ENCODE measurements at regions of chr19 and their contacts with region 1.

Region 1: DNA sequence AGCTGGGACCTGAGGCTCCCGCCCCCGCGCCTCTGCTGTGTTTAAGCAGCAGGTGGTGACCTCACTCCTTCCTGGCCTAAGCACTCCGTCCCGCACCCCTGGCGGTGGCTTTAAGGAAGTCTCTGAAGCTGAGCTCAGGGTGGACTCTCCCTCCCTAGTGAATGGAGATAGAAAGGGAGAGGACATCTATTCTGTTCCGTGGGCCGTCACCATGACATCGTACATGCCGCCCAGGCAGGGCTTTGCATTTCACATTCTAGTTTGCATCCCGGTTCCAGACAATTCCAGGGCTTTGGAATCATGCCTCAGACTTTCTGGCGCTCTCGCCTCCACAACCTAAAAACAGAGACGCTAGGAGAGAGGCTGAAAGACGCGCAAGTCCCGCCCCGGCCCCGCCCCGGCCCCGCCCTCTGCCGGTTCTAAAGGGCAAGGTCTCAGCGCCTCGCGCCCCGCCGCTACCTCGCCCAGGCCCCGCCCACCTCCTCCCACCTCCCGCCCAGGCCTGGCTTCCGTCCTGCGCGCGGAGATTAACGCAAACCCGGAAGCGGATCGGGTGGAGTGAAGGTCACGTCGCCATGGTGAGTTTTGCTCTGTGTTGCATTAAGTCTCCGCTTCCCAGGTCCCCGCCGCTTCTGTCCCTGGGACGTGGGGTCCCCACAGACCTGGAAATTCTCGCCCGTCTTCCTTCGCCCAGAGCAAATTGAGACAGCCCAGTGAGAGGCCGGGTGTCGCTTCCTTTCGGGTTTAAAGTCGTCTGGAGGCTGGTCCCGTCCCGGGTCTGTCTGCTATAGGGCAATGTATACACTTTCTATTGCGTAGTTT is at the start of gene ZNF808:
- DNase-seq: peak; percentile 87 to 92 (median 91)
- H3K4me3 ChIP-seq: peak within 1 kb of the TSS; percentile 63 to 95 (median 82)
- H3K4me3 Mint-ChIP-seq: peak within 1 kb of the TSS; percentile 98 to 99
- H3K27ac ChIP-seq: peak within 1 kb of the TSS; percentile 94 to 96
- H3K27ac Mint-ChIP-seq: peak within 1 kb of the TSS; percentile 96 to 100 (median 99)
- H3K4me1 ChIP-seq: peaks cover 14 to 23% of the 10 kb centered on the region in 2 donors
- H3K4me1 Mint-ChIP-seq: peaks cover 21% of the 10 kb centered on the region
- H3K27me3 ChIP-seq: no peaks in the 10 kb centered on the region
- H3K27me3 Mint-ChIP-seq: peaks cover 0 to 2% (median 1%) of the 10 kb centered on the region in 3 donors
- CTCF ChIP-seq: peak; percentile 78
- polyA plus RNA-seq, gene ZNF808: 2.6 to 9.2 (median 3.4) TPM

Region 2: DNA sequence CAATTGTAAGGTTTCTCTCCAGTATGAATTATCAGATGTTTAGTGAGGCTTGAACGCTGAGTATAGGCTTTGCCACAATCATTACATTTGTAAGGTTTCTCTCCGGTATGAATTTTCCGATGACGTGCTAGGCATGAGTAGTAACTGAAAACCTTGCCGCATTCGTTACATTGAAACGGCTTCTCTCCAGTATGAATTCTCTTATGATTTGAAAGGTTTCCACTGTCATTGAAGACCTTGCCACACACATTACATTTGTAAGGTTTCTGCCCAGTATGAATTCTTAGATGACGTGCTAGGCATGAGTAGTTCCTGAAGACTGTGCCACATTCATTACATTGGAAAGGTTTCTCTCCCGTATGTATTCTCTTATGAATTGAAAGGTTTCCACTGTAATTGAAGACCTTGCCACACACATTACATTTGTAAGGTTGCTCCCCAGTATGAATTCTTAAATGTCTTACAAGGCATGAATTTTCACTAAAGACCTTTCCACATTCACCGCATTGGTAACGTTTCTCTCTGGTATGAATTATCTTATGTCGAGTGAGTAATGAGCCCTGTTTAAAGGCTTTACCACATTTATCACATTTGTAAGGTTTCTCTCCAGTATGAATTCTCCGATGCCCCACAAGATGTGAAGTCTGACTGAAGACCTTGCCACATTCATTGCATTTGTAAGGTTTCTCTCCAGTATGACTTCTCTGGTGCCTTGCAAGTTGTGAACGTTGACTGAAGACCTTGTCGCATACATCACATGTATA is 371.6 kb before region 1 on chr19:
- intact Hi-C with region 1: no loop called
- DNase-seq: no peak
- H3K4me3 ChIP-seq: peak overlapping the region in 1 of 3 experiments; percentile 31
- H3K4me3 Mint-ChIP-seq: no peak overlapping the region
- H3K27ac ChIP-seq: no peak overlapping the region
- H3K27ac Mint-ChIP-seq: no peak overlapping the region
- H3K4me1 ChIP-seq: no peaks in the 10 kb centered on the region
- H3K4me1 Mint-ChIP-seq: no peaks in the 10 kb centered on the region
- H3K27me3 ChIP-seq: no peaks in the 10 kb centered on the region
- H3K27me3 Mint-ChIP-seq: no peaks in the 10 kb centered on the region
- CTCF ChIP-seq: no peak

Region 3: DNA sequence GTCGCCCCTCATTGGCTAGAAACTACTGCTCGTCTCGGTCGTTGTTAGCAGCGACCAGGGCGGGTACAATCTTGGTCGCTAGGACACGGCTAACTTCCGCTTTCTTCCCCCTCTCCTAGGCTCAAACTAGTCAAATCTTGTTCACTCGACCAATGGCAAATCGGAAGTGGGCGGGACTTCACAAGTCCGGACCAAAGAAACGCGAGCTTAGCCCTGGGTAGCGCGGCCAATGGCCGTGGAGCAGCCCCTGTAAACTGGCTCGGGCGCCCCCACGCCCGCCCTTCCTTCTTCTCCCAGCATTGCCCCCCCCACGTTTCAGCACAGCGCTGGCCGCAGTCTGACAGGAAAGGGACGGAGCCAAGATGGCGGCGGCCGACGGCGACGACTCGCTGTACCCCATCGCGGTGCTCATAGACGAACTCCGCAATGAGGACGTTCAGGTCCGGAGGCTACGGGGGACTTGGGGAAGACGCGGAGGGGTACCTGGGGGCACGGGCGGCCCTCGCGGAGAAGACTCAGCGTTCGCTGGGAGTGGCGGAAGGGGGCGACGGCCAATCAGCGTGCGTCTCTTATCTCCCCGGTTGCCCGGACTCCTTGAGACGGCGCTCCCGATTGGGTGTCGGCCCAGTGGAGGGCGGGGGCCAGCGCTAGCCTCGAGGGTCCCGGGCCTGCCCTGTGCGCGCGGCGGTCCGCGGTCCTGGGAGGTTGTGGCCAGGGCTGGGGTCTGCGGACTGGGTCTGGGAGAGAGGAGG is 337.4 kb before region 1 on chr19 and contains the start of gene PPP2R1A:
- intact Hi-C with region 1: loop called in 1 of 2 experiments (anchors 5 kb)
- DNase-seq: peak; percentile 100
- H3K4me3 ChIP-seq: peak within 1 kb of the TSS; percentile 85 to 94 (median 88)
- H3K4me3 Mint-ChIP-seq: peak within 1 kb of the TSS; percentile 90 to 99
- H3K27ac ChIP-seq: peak within 1 kb of the TSS; percentile 95 to 99
- H3K27ac Mint-ChIP-seq: peak within 1 kb of the TSS; percentile 98 to 100 (median 100)
- H3K4me1 ChIP-seq: peaks cover 20 to 24% of the 10 kb centered on the region in 2 donors
- H3K4me1 Mint-ChIP-seq: peaks cover 32% of the 10 kb centered on the region
- H3K27me3 ChIP-seq: no peaks in the 10 kb centered on the region
- H3K27me3 Mint-ChIP-seq: peaks cover 1 to 6% (median 4%) of the 10 kb centered on the region in 3 donors
- CTCF ChIP-seq: no peak
- polyA plus RNA-seq, gene PPP2R1A: 79.9 to 151 (median 127) TPM

Region 4: GRCh38 chr19:52296773-52297600 is 230.4 kb before region 1 on chr19 and contains the start of gene ZNF480:
- intact Hi-C with region 1: loop called (anchors 5 kb)
- DNase-seq: peak; percentile 80 to 86 (median 82)
- H3K4me3 ChIP-seq: peak within 1 kb of the TSS; percentile 93 to 99 (median 94)
- H3K4me3 Mint-ChIP-seq: peak within 1 kb of the TSS; percentile 95 to 97
- H3K27ac ChIP-seq: peak within 1 kb of the TSS; percentile 88 to 94
- H3K27ac Mint-ChIP-seq: peak within 1 kb of the TSS; percentile 91 to 98 (median 94)
- H3K4me1 ChIP-seq: peaks cover 15 to 18% of the 10 kb centered on the region in 2 donors
- H3K4me1 Mint-ChIP-seq: peaks cover 17% of the 10 kb centered on the region
- H3K27me3 ChIP-seq: no peaks in the 10 kb centered on the region
- H3K27me3 Mint-ChIP-seq: peaks cover 0 to 1% (median 0%) of the 10 kb centered on the region in 3 donors
- CTCF ChIP-seq: no peak
- polyA plus RNA-seq, gene ZNF480: 6.6 to 7.6 (median 7.4) TPM

Region 5: GRCh38 chr19:52570000-52570861 is 42.9 kb after region 1 on chr19 and contains the start of gene ZNF701:
- intact Hi-C with region 1: loop called (anchors 1 to 5 kb)
- DNase-seq: peak; percentile 89 to 91 (median 89)
- H3K4me3 ChIP-seq: peak within 1 kb of the TSS; percentile 73 to 99 (median 92)
- H3K4me3 Mint-ChIP-seq: peak within 1 kb of the TSS; percentile 96
- H3K27ac ChIP-seq: peak within 1 kb of the TSS; percentile 83 to 95
- H3K27ac Mint-ChIP-seq: peak within 1 kb of the TSS; percentile 92 to 97 (median 96)
- H3K4me1 ChIP-seq: peaks cover 11 to 13% of the 10 kb centered on the region in 2 donors
- H3K4me1 Mint-ChIP-seq: peaks cover 16% of the 10 kb centered on the region
- H3K27me3 ChIP-seq: no peaks in the 10 kb centered on the region
- H3K27me3 Mint-ChIP-seq: peaks cover 0 to 1% (median 0%) of the 10 kb centered on the region in 3 donors
- CTCF ChIP-seq: peak; percentile 51
- polyA plus RNA-seq, gene ZNF701: 4.8 to 8.2 (median 5.6) TPM

Region 6: DNA sequence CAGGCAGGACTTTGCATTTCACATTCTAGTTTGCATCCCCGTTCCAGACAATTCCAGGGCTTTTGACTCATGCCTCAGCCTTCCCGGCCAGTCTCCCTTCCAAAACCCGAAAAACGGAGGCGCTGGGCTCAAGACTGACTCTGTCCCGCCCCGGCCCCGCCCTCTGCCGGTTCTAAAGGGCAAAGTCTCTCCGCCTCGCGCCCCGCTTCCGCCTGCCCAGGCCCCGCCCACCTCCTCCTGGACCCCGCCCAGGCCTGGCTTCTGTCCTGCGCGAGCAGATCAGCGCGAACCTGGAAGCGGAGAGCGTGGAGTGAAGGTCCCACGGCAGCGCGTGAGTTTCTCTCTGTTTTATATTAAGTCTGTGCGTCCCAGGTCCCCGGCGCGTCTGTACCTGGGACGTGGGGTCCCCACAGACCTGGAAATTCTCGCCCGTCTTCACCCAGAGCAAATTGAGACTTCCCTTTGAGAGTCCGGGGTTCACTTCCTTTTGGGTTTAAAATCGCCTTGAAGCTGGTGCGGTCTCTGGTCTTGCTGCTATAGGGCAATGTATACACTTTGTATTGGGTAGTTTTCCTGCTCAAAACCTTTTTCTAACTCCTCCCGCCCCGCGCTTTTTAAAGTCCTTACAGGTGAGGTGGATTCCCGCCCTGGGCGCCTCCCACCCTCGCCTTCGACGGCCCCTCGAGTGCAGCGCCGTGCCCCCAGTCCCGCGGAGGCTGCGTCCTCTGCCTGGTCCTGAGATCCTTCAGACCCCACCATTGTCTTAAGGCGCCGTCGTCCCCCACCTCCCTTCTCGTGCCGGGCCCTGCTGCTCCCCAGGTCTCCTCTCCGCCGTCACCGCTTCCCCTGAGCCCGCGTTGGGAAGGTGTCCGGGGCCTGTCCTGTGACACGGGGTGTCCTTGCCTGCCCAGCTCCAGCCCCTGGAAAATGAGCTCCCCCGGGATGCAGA is 74.0 kb after region 1 on chr19:
- intact Hi-C with region 1: loop called in 1 of 2 experiments (anchors 2 kb)
- DNase-seq: peak; percentile 78 to 84 (median 79)
- H3K4me3 ChIP-seq: peak overlapping the region; percentile 54 to 79 (median 72)
- H3K4me3 Mint-ChIP-seq: peak overlapping the region; percentile 92 to 93
- H3K27ac ChIP-seq: peak overlapping the region in 1 of 2 donors; percentile 66
- H3K27ac Mint-ChIP-seq: peak overlapping the region in 6 of 7 donors; percentile 54 to 86 (median 78)
- H3K4me1 ChIP-seq: peaks cover 14 to 19% of the 10 kb centered on the region in 2 donors
- H3K4me1 Mint-ChIP-seq: peaks cover 27% of the 10 kb centered on the region
- H3K27me3 ChIP-seq: no peaks in the 10 kb centered on the region
- H3K27me3 Mint-ChIP-seq: peaks cover 0 to 2% (median 2%) of the 10 kb centered on the region in 3 donors
- CTCF ChIP-seq: peak; percentile 50

Region 7: DNA sequence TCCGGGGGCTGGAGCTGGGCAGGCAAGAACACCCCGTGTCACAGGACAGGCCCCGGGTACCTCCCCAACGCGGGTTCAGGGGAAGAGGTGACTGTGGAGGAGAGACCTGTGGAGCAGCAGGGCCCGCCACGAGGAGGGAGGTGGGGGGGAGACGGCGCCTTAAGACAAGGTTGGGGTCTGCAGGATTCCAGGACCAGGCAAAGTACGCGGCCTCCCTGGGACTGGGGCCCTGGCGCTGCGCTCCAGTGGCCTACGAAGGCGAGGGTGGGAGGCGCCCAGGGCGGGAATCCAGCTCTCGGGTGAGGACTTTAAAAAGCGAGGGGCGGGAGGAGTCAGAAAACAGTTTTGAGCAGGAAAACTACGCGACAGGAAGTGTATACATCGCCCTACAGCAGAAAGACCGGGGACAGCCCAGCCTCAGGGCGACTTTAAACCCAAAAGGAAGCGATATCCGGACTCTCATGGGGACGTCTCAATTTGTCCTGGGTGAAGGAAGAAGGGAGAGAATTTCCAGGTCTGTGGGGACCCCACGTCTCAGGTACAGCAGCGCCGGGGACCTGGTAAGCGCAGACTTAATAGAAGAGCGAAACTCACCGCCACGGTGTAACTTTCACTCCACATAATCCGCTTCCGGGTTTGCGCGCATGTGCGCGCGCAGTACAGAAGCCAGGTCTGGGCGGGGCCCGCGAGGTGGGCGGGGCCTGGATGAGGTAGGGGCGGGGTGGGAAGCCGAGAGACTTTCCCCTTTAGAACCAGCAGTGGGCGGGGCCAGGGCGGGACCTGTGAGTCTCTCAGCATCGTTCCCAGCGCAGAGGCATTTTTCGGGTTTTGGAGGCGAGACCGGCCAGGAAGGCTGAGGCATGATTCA is 110.6 kb after region 1 on chr19 and contains the start of gene ZNF83:
- intact Hi-C with region 1: loop called (anchors 5 kb)
- DNase-seq: peak; percentile 84 to 92 (median 89)
- H3K4me3 ChIP-seq: peak within 1 kb of the TSS; percentile 90 to 92 (median 91)
- H3K4me3 Mint-ChIP-seq: peak within 1 kb of the TSS; percentile 96 to 97
- H3K27ac ChIP-seq: peak within 1 kb of the TSS; percentile 83 to 95
- H3K27ac Mint-ChIP-seq: peak within 1 kb of the TSS; percentile 86 to 99 (median 93)
- H3K4me1 ChIP-seq: peaks cover 16 to 19% of the 10 kb centered on the region in 2 donors
- H3K4me1 Mint-ChIP-seq: peaks cover 22% of the 10 kb centered on the region
- H3K27me3 ChIP-seq: no peaks in the 10 kb centered on the region
- H3K27me3 Mint-ChIP-seq: peaks cover 0 to 3% (median 1%) of the 10 kb centered on the region in 3 donors
- CTCF ChIP-seq: no peak
- polyA plus RNA-seq, gene ZNF83: 2.4 to 47.1 (median 7.2) TPM

Region 8: GRCh38 chr19:52695996-52696395 is 168.7 kb after region 1 on chr19:
- intact Hi-C with region 1: no loop called
- DNase-seq: no peak
- H3K4me3 ChIP-seq: no peak overlapping the region
- H3K4me3 Mint-ChIP-seq: no peak overlapping the region
- H3K27ac ChIP-seq: no peak overlapping the region
- H3K27ac Mint-ChIP-seq: no peak overlapping the region
- H3K4me1 ChIP-seq: peaks cover 6% of the 10 kb centered on the region in 2 donors
- H3K4me1 Mint-ChIP-seq: peaks cover 7% of the 10 kb centered on the region
- H3K27me3 ChIP-seq: no peaks in the 10 kb centered on the region
- H3K27me3 Mint-ChIP-seq: peaks cover 0 to 1% (median 0%) of the 10 kb centered on the region in 3 donors
- CTCF ChIP-seq: no peak

Measured in CD14-positive monocyte (primary cell).